ENCODE measurements at regions of chr10 and their contacts with region 1.

Region 1: GRCh38 chr10:89563311-89563710 is 27.9 kb upstream of the SLC16A12 start:
- DNase-seq: no peak
- H3K27ac ChIP-seq: no peak overlapping the region
- CTCF ChIP-seq: no peak

Region 2: GRCh38 chr10:89466599-89467035 is 96.7 kb before region 1 on chr10:
- CTCF ChIA-PET with region 1: interaction called, 11 read pairs
- POLR2A ChIA-PET with region 1: no interaction called
- DNase-seq: peak; percentile 86
- H3K27ac ChIP-seq: peak overlapping the region; percentile 61
- CTCF ChIP-seq: peak; percentile 73

Region 3: GRCh38 chr10:89502556-89502955 is 60.8 kb before region 1 on chr10:
- CTCF ChIA-PET with region 1: no interaction called
- POLR2A ChIA-PET with region 1: no interaction called
- DNase-seq: peak; percentile 66
- H3K27ac ChIP-seq: peak overlapping the region; percentile 86
- CTCF ChIP-seq: no peak

Region 4: GRCh38 chr10:89659143-89660131 is 96.1 kb after region 1 on chr10:
- CTCF ChIA-PET with region 1: no interaction called
- POLR2A ChIA-PET with region 1: no interaction called
- DNase-seq: no peak
- H3K27ac ChIP-seq: no peak overlapping the region
- CTCF ChIP-seq: no peak

Measured in RWPE1 (cell line).